Activated T-helper 2 cell treated with anti-CD3 and anti-CD28 coated beads, Interferon-gamma antibody, Interleukin-2, Interleukin-4, amounts not matched to agents 10 μg/mL and 5 μg/mL and 100 μg/mL, durations not matched to agents 14 hours and 24 hours and 36 hours (primary cell): ENCODE measurements at regions of chr10 and their contacts with region 1.

Region 1: GRCh38 chr10:102743588-102744373 is at the start of gene WBP1L:
- DNase-seq: peak; percentile 94
- H3K4me3 Mint-ChIP-seq: peak within 1 kb of the TSS; percentile 89
- H3K27ac Mint-ChIP-seq: peak within 1 kb of the TSS; percentile 88
- H3K4me1 Mint-ChIP-seq: peaks cover 37% of the 10 kb centered on the region
- H3K27me3 Mint-ChIP-seq: no peaks in the 10 kb centered on the region
- total RNA-seq, gene WBP1L: 18.0 and 19.9 TPM in 2 replicates

Region 2: DNA sequence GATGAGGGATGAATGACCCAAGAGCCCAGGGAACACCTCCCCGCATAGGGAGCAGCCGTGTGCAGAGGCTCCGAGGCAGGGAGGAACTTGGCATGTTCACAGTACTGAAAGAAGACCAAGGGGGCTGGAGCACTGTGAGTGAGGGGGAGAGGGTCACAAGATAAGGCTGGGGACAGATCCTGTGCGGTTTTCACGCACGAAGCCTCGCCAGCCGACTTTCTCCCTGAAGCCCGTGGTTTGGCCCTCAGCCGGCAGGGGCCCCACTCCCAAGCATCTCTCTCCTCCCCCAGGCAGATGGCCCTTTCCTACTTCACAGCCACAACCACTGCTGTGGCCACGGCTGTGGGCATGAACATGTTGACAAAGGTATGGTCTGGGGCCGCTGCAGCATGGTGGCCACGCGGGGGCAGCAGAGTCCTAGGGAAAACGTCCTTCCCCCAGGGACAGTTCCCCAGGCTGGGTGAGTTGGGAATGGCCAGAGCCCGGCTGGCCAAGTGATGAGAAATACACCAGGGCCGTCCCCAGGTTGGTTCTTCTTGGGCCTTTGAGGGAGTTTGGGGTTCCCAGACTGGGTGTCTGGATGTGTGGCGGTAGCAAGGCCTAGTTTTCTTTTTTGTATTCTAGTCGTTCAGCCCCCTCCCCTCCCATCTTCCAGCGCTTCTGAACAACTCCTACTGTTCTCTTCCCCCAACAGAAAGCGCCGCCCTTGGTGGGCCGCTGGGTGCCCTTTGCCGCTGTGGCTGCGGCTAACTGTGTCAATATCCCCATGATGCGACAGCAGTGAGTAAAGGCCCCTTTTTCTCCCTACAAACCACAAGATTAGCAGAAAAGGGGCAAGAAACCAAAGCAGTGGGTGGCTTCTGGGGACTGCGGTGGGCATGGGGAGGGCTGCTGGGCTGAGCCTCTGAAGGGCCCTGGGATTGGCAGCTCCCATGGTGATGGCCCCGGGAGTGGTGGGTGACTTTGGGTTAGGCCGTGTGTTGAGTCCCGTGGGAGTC is 14.5 kb before region 1 on chr10:
- intact Hi-C with region 1: no loop called
- DNase-seq: peak; percentile 39
- H3K4me3 Mint-ChIP-seq: no peak overlapping the region
- H3K27ac Mint-ChIP-seq: peak overlapping the region; percentile 24
- H3K4me1 Mint-ChIP-seq: peaks cover 6% of the 10 kb centered on the region
- H3K27me3 Mint-ChIP-seq: no peaks in the 10 kb centered on the region

Region 3: DNA sequence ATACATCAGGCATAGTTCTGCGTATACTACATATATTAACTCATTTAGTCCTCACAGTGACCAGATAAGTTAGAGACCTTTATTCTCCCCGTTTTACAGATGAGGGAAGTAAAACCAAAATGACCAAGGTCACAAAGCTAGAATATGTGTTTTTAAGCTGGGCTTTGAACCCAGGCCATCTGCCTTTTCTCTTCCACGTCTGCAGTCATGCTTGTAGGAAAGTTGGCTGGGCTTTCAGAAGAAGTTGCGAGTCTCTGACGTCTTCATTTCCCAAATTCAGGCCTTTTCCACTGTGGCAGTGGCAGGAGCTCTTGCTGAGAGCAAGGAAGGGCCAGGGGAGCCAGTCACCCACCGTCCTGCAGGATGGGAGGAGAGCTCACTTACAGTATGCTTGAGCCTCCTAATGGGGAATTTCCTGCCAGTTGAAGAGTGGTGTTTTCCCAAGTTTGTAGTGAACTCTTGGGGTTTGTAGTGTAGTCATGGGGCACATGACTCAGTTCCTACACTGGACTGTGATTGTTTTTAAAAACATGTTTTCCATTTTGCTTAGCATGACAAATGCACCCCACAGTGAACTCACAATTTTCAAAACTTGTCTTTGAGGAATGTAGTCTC is 59.2 kb after region 1 on chr10:
- intact Hi-C with region 1: loop called (anchors 2 kb)
- DNase-seq: no peak
- H3K4me3 Mint-ChIP-seq: peak overlapping the region; percentile 34
- H3K27ac Mint-ChIP-seq: peak overlapping the region; percentile 98
- H3K4me1 Mint-ChIP-seq: peaks cover 22% of the 10 kb centered on the region
- H3K27me3 Mint-ChIP-seq: no peaks in the 10 kb centered on the region